Aorta (tissue), 5 donors: ENCODE measurements at regions of chr6 and their contacts with region 1.

Region 1: DNA sequence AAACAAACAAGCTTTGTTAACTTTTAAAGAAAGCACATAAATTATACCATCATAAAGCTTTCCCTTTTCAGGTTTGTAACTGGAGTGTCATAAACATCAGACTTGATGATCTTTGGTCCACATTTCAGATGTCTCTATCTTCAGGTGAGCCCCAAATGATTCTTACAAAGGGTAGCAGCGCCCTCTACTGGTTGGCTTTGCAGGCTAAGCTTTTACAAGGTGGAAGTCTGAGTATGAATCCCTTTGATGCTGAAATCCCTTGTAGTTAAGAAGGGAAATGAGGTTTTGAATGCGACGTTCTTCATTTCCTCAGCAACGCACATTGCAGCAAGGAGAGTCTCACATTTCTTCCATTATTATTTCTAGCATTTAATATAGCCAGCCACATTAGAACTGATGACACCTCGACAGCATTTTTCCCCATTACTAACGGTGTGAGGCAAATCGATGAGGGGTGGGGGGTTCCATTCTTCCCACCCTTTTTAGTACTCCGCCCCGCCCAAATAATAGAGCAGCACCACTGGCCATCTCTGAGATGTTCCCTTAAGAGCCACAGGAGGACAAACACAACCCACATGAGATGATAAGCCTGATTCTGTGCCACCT is 126.3 kb upstream of the NT5E start:
- DNase-seq: peak; percentile 66 to 85
- ATAC-seq: peak; percentile 79
- H3K4me3 ChIP-seq: no peak overlapping the region
- H3K27ac ChIP-seq: no peak overlapping the region
- H3K4me1 ChIP-seq: no peaks in the 10 kb centered on the region
- H3K27me3 ChIP-seq: no peaks in the 10 kb centered on the region

Region 2: DNA sequence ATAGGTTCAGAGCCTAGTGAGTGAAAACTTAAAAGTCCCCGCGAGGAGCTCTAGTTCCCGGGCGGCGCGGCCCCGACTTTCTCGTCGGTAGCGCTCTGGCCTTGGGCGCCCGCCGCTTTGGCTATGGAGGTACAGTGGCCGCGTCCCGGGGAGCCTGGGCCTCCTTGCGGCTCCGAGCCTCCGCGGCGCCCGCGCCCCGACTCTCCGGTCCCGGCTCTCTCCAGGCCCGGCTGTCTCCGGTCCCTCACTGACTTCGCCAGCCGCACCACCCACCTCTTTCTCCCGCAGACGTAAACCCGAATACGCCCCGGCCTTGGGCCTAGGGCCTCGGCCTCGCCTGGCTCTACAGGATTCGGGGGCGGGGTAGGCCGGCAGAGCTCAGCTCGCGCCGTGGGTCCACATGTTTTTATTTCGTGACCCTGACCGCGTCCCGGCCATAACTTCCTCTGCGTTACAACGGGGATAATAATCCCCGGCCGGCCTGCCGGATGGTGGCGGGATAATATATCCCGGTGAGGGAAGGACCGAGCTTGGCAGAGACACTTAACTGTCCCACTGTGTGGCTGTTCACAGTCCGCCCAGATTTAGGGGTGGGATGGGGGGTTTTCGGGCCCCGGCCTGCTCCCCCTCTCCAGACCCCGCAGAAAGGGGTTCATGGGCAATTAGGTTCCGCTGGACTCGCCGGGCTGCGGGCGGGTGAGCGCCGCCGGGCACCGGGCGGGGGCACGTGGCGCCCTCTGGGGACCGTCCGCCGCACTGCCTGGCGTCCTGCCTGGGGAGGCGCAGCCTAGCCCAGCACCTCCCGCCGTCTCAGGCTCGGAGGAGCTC is 549.2 kb before region 1 on chr6:
- intact Hi-C with region 1: loop called (anchors 5 to 10 kb)
- DNase-seq: peak; percentile 72 to 93
- ATAC-seq: peak; percentile 91
- H3K4me3 ChIP-seq: peak overlapping the region; percentile 22 to 55
- H3K27ac ChIP-seq: peak overlapping the region; percentile 83 to 89
- H3K4me1 ChIP-seq: no peaks in the 10 kb centered on the region
- H3K27me3 ChIP-seq: no peaks in the 10 kb centered on the region

Region 3: GRCh38 chr6:84779380-84779779 is 544.2 kb before region 1 on chr6:
- intact Hi-C with region 1: loop called (anchors 5 to 10 kb)
- DNase-seq: no peak
- ATAC-seq: no peak
- H3K4me3 ChIP-seq: no peak overlapping the region
- H3K27ac ChIP-seq: no peak overlapping the region
- H3K4me1 ChIP-seq: no peaks in the 10 kb centered on the region
- H3K27me3 ChIP-seq: no peaks in the 10 kb centered on the region

Region 4: GRCh38 chr6:85015396-85015990 is 308.0 kb before region 1 on chr6:
- intact Hi-C with region 1: loop called in 1 of 2 experiments (anchors 5 kb)
- DNase-seq: peak; percentile 60 to 85
- ATAC-seq: peak; percentile 86
- H3K4me3 ChIP-seq: no peak overlapping the region
- H3K27ac ChIP-seq: no peak overlapping the region
- H3K4me1 ChIP-seq: no peaks in the 10 kb centered on the region
- H3K27me3 ChIP-seq: no peaks in the 10 kb centered on the region

Region 5: GRCh38 chr6:85126485-85127167 is 196.9 kb before region 1 on chr6:
- intact Hi-C with region 1: loop called in 1 of 2 experiments (anchors 10 kb)
- DNase-seq: peak; percentile 47 to 85
- ATAC-seq: peak; percentile 83
- H3K4me3 ChIP-seq: no peak overlapping the region
- H3K27ac ChIP-seq: no peak overlapping the region
- H3K4me1 ChIP-seq: no peaks in the 10 kb centered on the region
- H3K27me3 ChIP-seq: no peaks in the 10 kb centered on the region